ENCODE measurements at regions of chr18 and their contacts with region 1.

Region 1: DNA sequence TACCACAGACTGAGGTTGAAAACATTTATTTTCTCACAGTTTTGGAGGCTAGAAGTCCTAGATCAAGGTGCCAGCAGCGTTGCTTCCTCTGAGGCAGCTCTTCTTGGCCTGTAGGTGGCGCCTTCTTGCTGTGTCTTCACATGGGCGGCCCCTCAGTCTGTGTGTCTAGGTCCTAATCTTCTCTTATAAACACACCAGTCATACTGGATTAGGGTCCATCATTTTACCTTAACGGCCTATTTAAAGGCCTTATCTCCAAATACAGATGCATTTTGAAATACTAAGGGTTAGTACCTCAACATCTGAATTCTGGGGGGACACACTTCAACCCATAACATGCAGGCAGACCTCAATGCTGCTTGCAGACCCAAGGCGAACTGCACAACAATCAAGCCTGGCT is 4.4 kb upstream of the RMC1 start:
- DNase-seq: peak; percentile 75

Region 2: GRCh38 chr18:23406271-23406787 is 92.5 kb before region 1 on chr18:
- CTCF ChIA-PET with region 1: no interaction called
- POLR2A ChIA-PET with region 1: no interaction called
- DNase-seq: no peak

Region 3: GRCh38 chr18:23468753-23469459 is 30.0 kb before region 1 on chr18:
- CTCF ChIA-PET with region 1: interaction called, 10 read pairs
- POLR2A ChIA-PET with region 1: no interaction called
- DNase-seq: no peak

Region 4: GRCh38 chr18:23487738-23488570 is 10.9 kb before region 1 on chr18:
- CTCF ChIA-PET with region 1: interaction called, 25 read pairs
- POLR2A ChIA-PET with region 1: interaction called, 6 read pairs
- DNase-seq: peak; percentile 28

Region 5: DNA sequence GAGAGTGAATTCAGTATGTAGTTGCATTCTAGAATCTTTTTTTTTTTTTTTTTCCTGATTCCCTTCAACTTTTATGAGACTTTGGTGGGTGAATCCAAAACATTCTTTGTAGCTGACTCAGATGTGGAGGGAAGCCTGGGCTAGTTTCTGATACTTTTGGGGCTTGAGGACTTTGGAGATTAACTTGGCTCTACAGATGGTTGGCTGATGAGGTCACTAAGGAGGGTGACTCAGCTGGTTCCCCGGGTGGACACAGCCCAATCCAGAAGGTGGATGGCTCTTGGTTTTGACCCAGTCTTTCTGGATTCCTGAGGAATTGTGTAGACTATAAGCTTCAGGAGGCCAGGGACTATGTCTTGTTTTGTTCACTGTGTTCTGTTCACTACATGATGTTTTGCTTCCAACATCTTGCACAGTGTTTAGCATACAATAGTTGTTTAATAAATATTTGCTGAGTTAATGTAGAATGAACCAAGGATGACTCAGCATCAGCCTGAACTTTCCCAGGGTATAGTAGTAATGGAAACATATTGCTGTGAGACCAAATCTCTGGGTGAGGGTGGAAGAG is 220.8 kb after region 1 on chr18:
- CTCF ChIA-PET with region 1: no interaction called
- POLR2A ChIA-PET with region 1: no interaction called
- DNase-seq: no peak

Measured in HEK293T (cell line).